Heart right ventricle (tissue), 16 donors: ENCODE measurements at regions of chr3 and their contacts with region 1.

Region 1: DNA sequence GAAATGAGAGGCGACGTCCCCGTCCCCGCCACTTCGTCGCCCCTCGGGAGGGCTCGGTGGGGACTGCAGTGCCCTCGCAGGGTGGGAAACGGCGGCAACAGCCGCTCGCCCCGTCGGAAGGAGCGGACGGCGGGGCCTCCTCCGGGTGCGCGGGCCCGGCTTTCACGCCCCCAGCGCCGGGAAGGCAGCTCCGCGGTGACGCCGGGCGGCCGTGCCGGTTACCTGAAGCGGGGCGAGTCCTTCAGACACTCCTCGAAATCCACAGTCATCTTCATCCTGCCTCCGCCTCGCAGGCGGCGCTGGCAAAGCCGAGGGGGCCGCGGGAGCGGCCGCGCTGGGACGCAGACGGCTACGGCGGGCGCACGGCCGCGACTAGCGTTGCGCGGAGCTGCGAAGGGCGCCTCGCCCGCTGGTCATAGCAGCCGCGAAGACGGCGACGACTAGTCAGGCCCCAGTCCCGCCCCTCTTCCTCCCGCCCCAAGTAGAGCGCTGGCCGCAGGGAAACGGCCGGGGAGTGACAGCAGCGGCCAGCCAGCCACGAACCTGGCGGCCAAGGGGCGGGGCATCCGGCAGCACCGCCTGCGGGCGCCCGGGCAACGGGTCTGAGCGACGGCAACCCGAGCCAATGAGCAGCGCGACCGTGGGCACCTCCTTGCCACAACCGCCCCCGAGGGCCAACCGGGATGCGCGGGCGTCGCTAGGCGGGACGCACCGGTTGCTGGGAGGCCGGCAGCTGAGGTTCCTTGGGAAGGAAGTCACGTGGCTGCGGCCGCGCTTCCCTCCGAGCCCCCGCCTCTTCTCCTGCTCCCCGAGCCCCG is at the start of gene ACAP2:
- DNase-seq: peak; percentile 100
- ATAC-seq: peak; percentile 97 to 100 (median 99)
- H3K4me3 ChIP-seq: peak within 1 kb of the TSS; percentile 67 to 100 (median 96)
- H3K27ac ChIP-seq: peak within 1 kb of the TSS; percentile 86 to 99 (median 97)
- H3K4me1 ChIP-seq: peaks cover 0 to 40% (median 31%) of the 10 kb centered on the region in 9 donors
- H3K27me3 ChIP-seq: no peaks in the 10 kb centered on the region
- CTCF ChIP-seq: peak in 1 of 9 donors; percentile 17
- total RNA-seq, gene ACAP2: 13.3 to 26.7 (median 15.8) TPM

Region 2: GRCh38 chr3:194671900-194672808 is 770.6 kb before region 1 on chr3 and contains the start of gene LSG1:
- intact Hi-C with region 1: loop called in 1 of 10 experiments (anchors 10 kb)
- DNase-seq: peak; percentile 89 to 95
- ATAC-seq: peak; percentile 93 to 97 (median 96)
- H3K4me3 ChIP-seq: peak within 1 kb of the TSS; percentile 54 to 97 (median 83)
- H3K27ac ChIP-seq: peak within 1 kb of the TSS; percentile 73 to 95 (median 92)
- H3K4me1 ChIP-seq: peaks cover 6 to 33% (median 18%) of the 10 kb centered on the region in 9 donors
- H3K27me3 ChIP-seq: no peaks in the 10 kb centered on the region
- CTCF ChIP-seq: no peak
- total RNA-seq, gene LSG1: 11.9 to 22.1 (median 18.9) TPM

Region 3: GRCh38 chr3:195271116-195271858 is 171.5 kb before region 1 on chr3 and contains the start of gene XXYLT1:
- intact Hi-C with region 1: loop called in 1 of 10 experiments (anchors 5 kb)
- DNase-seq: peak; percentile 91 to 93
- ATAC-seq: peak; percentile 95 to 98 (median 97)
- H3K4me3 ChIP-seq: peak within 1 kb of the TSS; percentile 70 to 98 (median 82)
- H3K27ac ChIP-seq: peak within 1 kb of the TSS; percentile 73 to 95 (median 92)
- H3K4me1 ChIP-seq: peaks cover 8 to 28% (median 23%) of the 10 kb centered on the region in 9 donors
- H3K27me3 ChIP-seq: no peaks in the 10 kb centered on the region
- CTCF ChIP-seq: peak; percentile 92 to 98 (median 96)
- total RNA-seq, gene XXYLT1: 2.2 to 7.2 (median 3.6) TPM

Region 4: GRCh38 chr3:195352895-195353488 is 89.8 kb before region 1 on chr3:
- intact Hi-C with region 1: loop called in 2 of 10 experiments (anchors 5 to 10 kb)
- DNase-seq: no peak
- ATAC-seq: peak in 1 of 8 donors; percentile 33
- H3K4me3 ChIP-seq: no peak overlapping the region
- H3K27ac ChIP-seq: no peak overlapping the region
- H3K4me1 ChIP-seq: peaks cover 0 to 25% (median 15%) of the 10 kb centered on the region in 9 donors
- H3K27me3 ChIP-seq: no peaks in the 10 kb centered on the region
- CTCF ChIP-seq: no peak

Region 5: GRCh38 chr3:195385526-195385925 is 57.3 kb before region 1 on chr3:
- intact Hi-C with region 1: no loop called
- DNase-seq: no peak
- ATAC-seq: no peak
- H3K4me3 ChIP-seq: no peak overlapping the region
- H3K27ac ChIP-seq: no peak overlapping the region
- H3K4me1 ChIP-seq: peaks cover 0 to 13% (median 7%) of the 10 kb centered on the region in 9 donors
- H3K27me3 ChIP-seq: no peaks in the 10 kb centered on the region
- CTCF ChIP-seq: no peak

Region 6: DNA sequence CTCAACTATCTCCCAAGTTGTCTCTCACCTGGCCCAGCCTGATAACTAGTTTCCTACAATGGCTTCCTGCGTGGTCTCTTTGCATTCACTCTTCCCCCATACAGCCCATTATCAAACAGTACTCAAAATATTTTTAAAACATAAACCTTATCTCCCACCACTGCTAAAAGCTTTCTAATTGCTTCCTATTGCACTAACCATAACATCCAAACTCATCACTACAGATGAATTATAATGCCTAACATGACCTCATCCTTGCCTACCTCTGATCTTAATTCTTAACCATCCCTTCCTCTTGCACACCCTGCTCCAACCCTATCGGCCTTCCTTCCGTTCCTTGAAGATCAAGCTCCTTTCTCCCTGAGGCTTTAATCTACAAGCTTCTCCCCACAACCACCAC is 16.9 kb before region 1 on chr3:
- intact Hi-C with region 1: loop called in 1 of 10 experiments (anchors 2 kb)
- DNase-seq: no peak
- ATAC-seq: no peak
- H3K4me3 ChIP-seq: no peak overlapping the region
- H3K27ac ChIP-seq: no peak overlapping the region
- H3K4me1 ChIP-seq: peaks cover 0 to 15% (median 11%) of the 10 kb centered on the region in 9 donors
- H3K27me3 ChIP-seq: no peaks in the 10 kb centered on the region
- CTCF ChIP-seq: no peak

Region 7: DNA sequence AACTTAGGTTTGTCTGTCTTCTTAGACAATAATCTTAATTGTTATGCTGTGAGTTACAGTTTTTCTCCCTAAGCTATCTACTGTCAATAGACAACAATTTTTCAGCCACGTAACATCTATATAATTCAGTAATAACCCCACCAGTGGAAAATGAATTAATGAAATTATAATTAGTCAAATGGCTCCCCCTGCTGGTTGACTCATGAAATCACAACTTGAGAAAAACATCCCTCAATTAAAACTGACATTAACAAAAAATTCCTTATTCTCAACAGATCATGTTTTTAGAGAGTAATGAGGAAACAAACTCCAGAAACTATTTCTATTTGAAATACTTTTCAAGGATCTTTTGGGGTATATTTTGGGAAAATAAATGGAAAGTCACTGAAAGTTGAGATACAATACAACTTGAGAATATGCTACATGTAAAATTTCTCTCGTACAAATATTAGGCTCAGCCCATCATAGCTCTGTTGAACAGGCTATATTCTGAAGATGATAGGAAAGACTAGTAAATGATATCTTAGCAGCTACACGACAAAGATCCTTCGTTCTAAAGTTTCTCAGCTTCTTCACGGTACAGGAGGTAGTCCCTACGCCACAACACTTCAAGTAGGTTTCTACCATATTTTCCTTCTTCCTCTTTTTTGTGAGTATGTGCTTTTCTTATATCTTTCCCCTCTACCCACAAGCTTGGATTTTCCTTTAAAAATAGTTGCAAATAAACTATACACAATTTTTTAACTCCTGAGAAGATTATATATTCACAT is 79.7 kb after region 1 on chr3:
- intact Hi-C with region 1: loop called in 2 of 10 experiments (anchors 5 kb)
- DNase-seq: no peak
- ATAC-seq: no peak
- H3K4me3 ChIP-seq: no peak overlapping the region
- H3K27ac ChIP-seq: no peak overlapping the region
- H3K4me1 ChIP-seq: peaks cover 0 to 15% (median 5%) of the 10 kb centered on the region in 9 donors
- H3K27me3 ChIP-seq: no peaks in the 10 kb centered on the region
- CTCF ChIP-seq: peak; percentile 63 to 87 (median 78)